Posterior vena cava (tissue), 2 donors: ENCODE measurements at regions of chr2 and their contacts with region 1.

Region 1: DNA sequence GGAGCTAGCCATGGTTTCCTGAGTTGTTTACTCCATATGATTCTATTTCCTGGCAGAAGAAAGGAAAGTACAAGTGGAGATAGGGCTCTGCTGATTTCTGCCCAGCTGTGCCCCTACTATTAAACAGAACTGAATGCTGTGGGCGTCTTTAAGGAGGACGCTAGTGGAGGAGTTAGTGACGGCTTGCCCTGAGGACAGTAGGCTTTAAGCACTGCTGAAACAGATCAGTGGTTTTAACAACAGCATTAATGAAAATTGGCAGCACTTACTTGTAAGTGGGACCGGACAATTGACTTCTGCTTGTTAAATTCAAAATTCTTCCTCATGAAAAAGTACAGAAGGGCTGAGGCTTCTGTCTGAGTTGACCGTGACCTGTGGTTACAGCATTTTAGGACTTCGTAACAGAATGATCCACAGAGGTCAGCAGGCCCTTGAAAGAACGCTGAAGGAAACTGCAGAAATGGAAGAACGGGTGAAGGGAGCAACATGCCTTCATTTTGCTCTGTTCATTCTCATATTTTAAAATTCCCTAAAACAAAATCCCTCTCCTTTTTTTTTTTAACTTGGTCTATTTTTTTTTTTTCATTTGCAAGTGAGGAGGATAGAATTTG is 80.6 kb upstream of the CCDC195 start:
- DNase-seq: no peak

Region 2: GRCh38 chr2:224507789-224508188 is 289.0 kb before region 1 on chr2:
- intact Hi-C with region 1: loop called in 1 of 2 experiments (anchors 5 kb)
- DNase-seq: no peak